Ascending aorta (tissue), 2 donors: ENCODE measurements at regions of chr17 and their contacts with region 1.

Region 1: GRCh38 chr17:29111816-29112499 is 68.2 kb downstream of the MYO18A start:
- DNase-seq: peak in 1 of 2 donors; percentile 79
- H3K4me3 ChIP-seq: no peak overlapping the region
- H3K27ac ChIP-seq: no peak overlapping the region
- H3K4me1 ChIP-seq: peaks cover 3% of the 10 kb centered on the region in 2 donors
- H3K27me3 ChIP-seq: no peaks in the 10 kb centered on the region
- CTCF ChIP-seq: peak; percentile 69 to 86 (median 84)

Region 2: DNA sequence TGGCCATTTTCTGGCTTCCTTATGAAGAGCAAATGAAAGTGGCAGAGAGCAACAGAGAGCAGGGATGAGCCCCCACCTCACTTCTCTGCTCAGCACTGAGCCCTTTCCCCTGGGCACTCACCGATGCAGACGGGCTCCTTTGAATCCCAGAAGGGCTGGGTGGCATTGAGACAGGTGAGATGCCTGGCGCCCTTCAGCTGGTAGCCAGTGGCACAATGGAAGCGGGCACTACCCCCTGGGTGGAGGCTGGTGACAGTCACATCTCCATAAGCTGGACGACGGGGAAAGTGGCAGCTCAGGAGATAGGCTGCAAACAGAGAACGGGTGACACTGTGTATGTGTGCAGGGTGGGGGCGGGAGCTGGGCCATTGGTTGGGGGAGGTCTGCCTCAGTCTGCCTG is 148.1 kb before region 1 on chr17:
- intact Hi-C with region 1: loop called (anchors 2 kb)
- DNase-seq: no peak
- H3K4me3 ChIP-seq: no peak overlapping the region
- H3K27ac ChIP-seq: no peak overlapping the region
- H3K4me1 ChIP-seq: no peaks in the 10 kb centered on the region
- H3K27me3 ChIP-seq: no peaks in the 10 kb centered on the region
- CTCF ChIP-seq: no peak

Region 3: DNA sequence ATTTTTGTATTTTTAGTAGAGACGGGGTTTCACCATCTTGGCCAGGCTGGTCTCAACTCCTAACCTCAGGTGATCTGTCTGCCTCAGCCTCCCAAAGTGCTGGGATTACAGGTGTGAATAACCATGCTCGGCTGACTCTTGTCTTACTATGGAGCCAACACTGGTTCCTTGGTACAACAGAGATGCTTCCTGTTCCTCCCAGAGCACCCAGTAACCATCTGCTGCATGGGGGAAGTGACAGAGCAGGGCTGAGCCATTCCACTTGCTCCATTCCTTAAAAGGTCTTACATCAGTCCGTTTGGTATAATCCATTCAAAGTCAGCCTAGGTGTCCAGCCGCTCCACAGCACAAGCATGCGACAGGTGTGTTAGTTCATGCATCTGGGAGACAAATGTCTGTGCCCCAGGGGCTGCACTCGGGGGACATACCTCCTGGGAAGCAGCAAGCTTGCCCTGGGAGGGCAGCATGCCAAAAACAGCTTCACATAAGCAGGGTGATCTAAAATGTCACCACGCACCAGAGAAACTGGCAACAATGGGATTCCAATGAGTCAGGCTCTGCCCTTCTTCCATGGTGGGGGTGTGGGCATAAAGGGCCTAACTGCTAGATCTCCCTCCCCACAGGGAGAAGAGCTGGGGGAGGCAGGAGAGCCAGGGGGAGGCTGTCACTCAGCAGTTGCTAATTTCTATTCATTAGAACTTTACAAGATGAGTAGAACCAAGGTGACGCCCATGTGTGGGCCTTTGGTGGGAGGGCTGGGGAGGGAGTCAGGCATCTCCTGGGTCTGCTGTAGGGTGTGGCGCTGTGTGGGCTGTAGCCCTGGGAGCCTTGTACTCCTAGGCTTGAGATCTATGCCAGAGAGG is 33.5 kb before region 1 on chr17:
- intact Hi-C with region 1: no loop called
- DNase-seq: no peak
- H3K4me3 ChIP-seq: no peak overlapping the region
- H3K27ac ChIP-seq: no peak overlapping the region
- H3K4me1 ChIP-seq: no peaks in the 10 kb centered on the region
- H3K27me3 ChIP-seq: no peaks in the 10 kb centered on the region
- CTCF ChIP-seq: no peak

Region 4: GRCh38 chr17:29124117-29124924 is 12.4 kb after region 1 on chr17:
- intact Hi-C with region 1: no loop called
- DNase-seq: no peak
- H3K4me3 ChIP-seq: no peak overlapping the region
- H3K27ac ChIP-seq: peak overlapping the region in 1 of 2 donors; percentile 4
- H3K4me1 ChIP-seq: peaks cover 0 to 11% of the 10 kb centered on the region in 2 donors
- H3K27me3 ChIP-seq: no peaks in the 10 kb centered on the region
- CTCF ChIP-seq: peak; percentile 45 to 74 (median 68)